ENCODE measurements at regions of chr1 and their contacts with region 1.

Region 1: GRCh38 chr1:205335643-205336091 is 14.1 kb upstream of the NUAK2 start:
- DNase-seq: peak; percentile 63 to 83 (median 64)
- H3K4me3 ChIP-seq: no peak overlapping the region
- H3K4me3 Mint-ChIP-seq: no peak overlapping the region
- H3K27ac ChIP-seq: no peak overlapping the region
- H3K27ac Mint-ChIP-seq: no peak overlapping the region
- H3K4me1 ChIP-seq: no peaks in the 10 kb centered on the region
- H3K4me1 Mint-ChIP-seq: peaks cover 0 to 2% (median 0%) of the 10 kb centered on the region in 3 donors
- H3K27me3 ChIP-seq: no peaks in the 10 kb centered on the region
- H3K27me3 Mint-ChIP-seq: peaks cover 0 to 10% of the 10 kb centered on the region in 2 donors

Region 2: GRCh38 chr1:205225901-205226755 is 109.5 kb before region 1 on chr1:
- CTCF ChIA-PET with region 1: no interaction called
- POLR2A ChIA-PET with region 1: no interaction called
- DNase-seq: no peak
- H3K4me3 ChIP-seq: no peak overlapping the region
- H3K4me3 Mint-ChIP-seq: peak overlapping the region in 6 of 7 donors; percentile 3 to 89 (median 26)
- H3K27ac ChIP-seq: no peak overlapping the region
- H3K27ac Mint-ChIP-seq: peak overlapping the region in 1 of 8 donors; percentile 69
- H3K4me1 ChIP-seq: peaks cover 17% of the 10 kb centered on the region
- H3K4me1 Mint-ChIP-seq: peaks cover 21 to 29% (median 27%) of the 10 kb centered on the region in 3 donors
- H3K27me3 ChIP-seq: no peaks in the 10 kb centered on the region
- H3K27me3 Mint-ChIP-seq: peaks cover 10 to 20% of the 10 kb centered on the region in 2 donors

Region 3: GRCh38 chr1:205354259-205354904 is 18.7 kb after region 1 on chr1:
- CTCF ChIA-PET with region 1: interaction called, 29 read pairs
- POLR2A ChIA-PET with region 1: no interaction called
- DNase-seq: peak; percentile 32 to 74 (median 46)
- H3K4me3 ChIP-seq: no peak overlapping the region
- H3K4me3 Mint-ChIP-seq: no peak overlapping the region
- H3K27ac ChIP-seq: no peak overlapping the region
- H3K27ac Mint-ChIP-seq: no peak overlapping the region
- H3K4me1 ChIP-seq: no peaks in the 10 kb centered on the region
- H3K4me1 Mint-ChIP-seq: no peaks in the 10 kb centered on the region
- H3K27me3 ChIP-seq: peaks cover 11% of the 10 kb centered on the region
- H3K27me3 Mint-ChIP-seq: peaks cover 9 to 33% of the 10 kb centered on the region in 2 donors

Region 4: GRCh38 chr1:205365945-205366463 is 30.3 kb after region 1 on chr1:
- CTCF ChIA-PET with region 1: no interaction called
- POLR2A ChIA-PET with region 1: no interaction called
- DNase-seq: no peak
- H3K4me3 ChIP-seq: no peak overlapping the region
- H3K4me3 Mint-ChIP-seq: no peak overlapping the region
- H3K27ac ChIP-seq: no peak overlapping the region
- H3K27ac Mint-ChIP-seq: no peak overlapping the region
- H3K4me1 ChIP-seq: no peaks in the 10 kb centered on the region
- H3K4me1 Mint-ChIP-seq: no peaks in the 10 kb centered on the region
- H3K27me3 ChIP-seq: peaks cover 3% of the 10 kb centered on the region
- H3K27me3 Mint-ChIP-seq: peaks cover 2 to 8% of the 10 kb centered on the region in 2 donors

Region 5: DNA sequence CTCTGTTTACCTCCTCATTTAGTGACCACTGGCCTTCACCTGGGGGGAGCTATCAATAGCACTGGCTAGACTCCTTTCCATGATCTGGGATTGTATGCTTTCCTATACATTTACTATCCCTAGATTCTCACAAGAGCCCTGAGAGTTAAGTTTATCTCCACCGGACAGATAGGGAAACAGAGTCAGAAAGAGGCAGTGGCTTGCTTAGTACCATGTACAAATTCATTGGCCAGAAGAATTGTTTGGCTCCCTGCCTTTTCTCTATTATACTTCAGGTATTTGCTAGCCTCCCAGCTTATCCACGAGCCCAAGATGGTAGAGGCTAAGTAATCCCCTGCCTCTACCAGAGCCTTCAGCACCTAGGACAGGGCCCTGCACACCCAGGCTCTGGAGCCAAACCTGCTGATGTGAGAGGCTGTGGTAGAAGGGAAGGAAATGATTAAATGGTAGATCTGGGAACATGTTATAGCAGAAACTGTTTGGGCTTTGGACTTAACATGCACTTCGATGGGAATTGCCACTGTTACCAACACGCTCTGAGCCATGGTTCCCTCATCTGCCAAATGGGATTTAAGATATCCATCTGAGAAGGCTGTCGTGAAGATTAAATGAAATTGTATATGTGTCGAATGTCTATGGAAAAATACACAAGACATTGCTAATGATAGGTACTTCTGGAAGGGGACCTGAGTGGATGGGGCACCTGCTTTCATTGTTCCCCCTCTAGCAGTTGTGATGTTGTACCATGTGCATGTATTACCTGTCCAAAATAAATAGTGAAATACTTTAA is 123.3 kb after region 1 on chr1:
- CTCF ChIA-PET with region 1: no interaction called
- POLR2A ChIA-PET with region 1: no interaction called
- DNase-seq: peak in 1 of 5 donors; percentile 56
- H3K4me3 ChIP-seq: no peak overlapping the region
- H3K4me3 Mint-ChIP-seq: peak overlapping the region in 1 of 7 donors; percentile 62
- H3K27ac ChIP-seq: no peak overlapping the region
- H3K27ac Mint-ChIP-seq: no peak overlapping the region
- H3K4me1 ChIP-seq: peaks cover 16% of the 10 kb centered on the region
- H3K4me1 Mint-ChIP-seq: peaks cover 17 to 24% (median 17%) of the 10 kb centered on the region in 3 donors
- H3K27me3 ChIP-seq: peaks cover 24% of the 10 kb centered on the region
- H3K27me3 Mint-ChIP-seq: peaks cover 31 to 50% of the 10 kb centered on the region in 2 donors

Measured in CD8-positive, alpha-beta memory T cell (primary cell).